ENCODE measurements at regions of chr20 and their contacts with region 1.

Region 1: GRCh38 chr20:50398821-50399554 is 111.2 kb upstream of the PTPN1 start:
- DNase-seq: peak in 1 of 2 experiments; percentile 49
- H3K4me3 ChIP-seq: no peak overlapping the region
- H3K27ac ChIP-seq: no peak overlapping the region
- H3K4me1 ChIP-seq: peaks cover 37% of the 10 kb centered on the region
- H3K27me3 ChIP-seq: no peaks in the 10 kb centered on the region
- CTCF ChIP-seq: no peak

Region 2: GRCh38 chr20:50215101-50215690 is 183.8 kb before region 1 on chr20:
- CTCF ChIA-PET with region 1: no interaction called
- POLR2A ChIA-PET with region 1: no interaction called
- intact Hi-C with region 1: no loop called
- DNase-seq: no peak
- H3K4me3 ChIP-seq: no peak overlapping the region
- H3K27ac ChIP-seq: no peak overlapping the region
- H3K4me1 ChIP-seq: peaks cover 73% of the 10 kb centered on the region
- H3K27me3 ChIP-seq: no peaks in the 10 kb centered on the region
- CTCF ChIP-seq: no peak

Region 3: GRCh38 chr20:50292324-50293243 is 106.4 kb before region 1 on chr20:
- CTCF ChIA-PET with region 1: no interaction called
- POLR2A ChIA-PET with region 1: interaction called, 26 read pairs
- intact Hi-C with region 1: no loop called
- DNase-seq: peak; percentile 86 to 92
- H3K4me3 ChIP-seq: no peak overlapping the region; the same call in 1 of the 2 replicates
- H3K27ac ChIP-seq: peak overlapping the region; percentile 86
- H3K4me1 ChIP-seq: peaks cover 46% of the 10 kb centered on the region
- H3K27me3 ChIP-seq: no peaks in the 10 kb centered on the region
- CTCF ChIP-seq: no peak

Region 4: GRCh38 chr20:50320910-50321796 is 77.8 kb before region 1 on chr20:
- CTCF ChIA-PET with region 1: no interaction called
- POLR2A ChIA-PET with region 1: no interaction called
- intact Hi-C with region 1: no loop called
- DNase-seq: peak; percentile 94 to 95
- H3K4me3 ChIP-seq: peak overlapping the region; percentile 67
- H3K27ac ChIP-seq: peak overlapping the region; percentile 95
- H3K4me1 ChIP-seq: peaks cover 41% of the 10 kb centered on the region
- H3K27me3 ChIP-seq: no peaks in the 10 kb centered on the region
- CTCF ChIP-seq: no peak

Region 5: DNA sequence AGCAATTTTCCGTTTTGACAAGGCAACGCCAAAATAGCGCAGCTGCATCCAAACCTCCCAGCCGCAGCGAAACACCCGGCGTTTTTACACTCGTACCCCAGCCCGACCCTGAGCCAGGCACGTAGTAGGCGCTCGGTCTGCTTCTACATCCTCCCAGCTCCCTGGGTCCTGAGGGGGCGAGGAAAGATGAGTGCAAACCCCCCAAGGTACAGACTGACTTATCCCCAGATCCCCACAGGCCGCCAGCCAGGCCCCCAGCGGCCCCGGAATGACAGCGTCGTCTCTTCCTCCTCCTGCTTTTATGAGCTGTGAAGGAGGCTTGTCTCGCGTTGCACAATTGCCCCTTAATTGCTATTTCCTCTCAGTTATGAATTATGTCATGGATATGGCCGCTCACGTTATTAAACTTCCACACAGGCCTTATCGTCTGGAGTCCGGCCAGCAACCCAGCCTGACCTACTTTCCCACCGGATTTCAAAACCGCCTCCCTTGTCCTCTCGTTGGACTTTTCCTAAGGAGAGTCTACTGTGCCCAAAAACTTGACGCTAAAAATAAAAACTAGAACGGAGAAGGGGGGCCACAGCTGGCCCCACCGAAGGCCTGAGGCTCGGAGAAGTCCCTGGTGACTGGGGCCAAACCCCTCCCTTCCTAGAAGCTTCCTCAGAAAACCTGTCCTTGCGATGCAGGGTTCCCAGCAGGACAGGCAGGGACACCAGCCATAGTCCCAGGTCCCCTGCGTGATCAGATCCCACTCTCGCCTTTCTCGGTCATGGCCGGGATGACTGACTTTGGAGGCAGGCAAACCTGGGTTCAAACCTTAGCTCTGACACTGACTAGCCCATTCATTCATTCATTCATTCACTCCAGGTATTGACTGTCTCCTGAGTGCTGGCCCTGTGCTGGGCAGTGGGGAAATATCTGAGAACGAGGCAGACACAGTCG is 19.7 kb before region 1 on chr20:
- CTCF ChIA-PET with region 1: no interaction called
- POLR2A ChIA-PET with region 1: no interaction called
- intact Hi-C with region 1: no loop called
- DNase-seq: peak in 1 of 2 experiments; percentile 43
- H3K4me3 ChIP-seq: no peak overlapping the region
- H3K27ac ChIP-seq: no peak overlapping the region
- H3K4me1 ChIP-seq: peaks cover 47% of the 10 kb centered on the region
- H3K27me3 ChIP-seq: no peaks in the 10 kb centered on the region
- CTCF ChIP-seq: no peak

Region 6: GRCh38 chr20:50426866-50427739 is 28.1 kb after region 1 on chr20:
- CTCF ChIA-PET with region 1: no interaction called
- POLR2A ChIA-PET with region 1: interaction called, 10 read pairs
- intact Hi-C with region 1: no loop called
- DNase-seq: no peak
- H3K4me3 ChIP-seq: no peak overlapping the region
- H3K27ac ChIP-seq: no peak overlapping the region
- H3K4me1 ChIP-seq: peaks cover 50% of the 10 kb centered on the region
- H3K27me3 ChIP-seq: no peaks in the 10 kb centered on the region
- CTCF ChIP-seq: no peak

Measured in PC-9 (cell line).